ENCODE measurements at regions of chr2 and their contacts with region 1.

Region 1: DNA sequence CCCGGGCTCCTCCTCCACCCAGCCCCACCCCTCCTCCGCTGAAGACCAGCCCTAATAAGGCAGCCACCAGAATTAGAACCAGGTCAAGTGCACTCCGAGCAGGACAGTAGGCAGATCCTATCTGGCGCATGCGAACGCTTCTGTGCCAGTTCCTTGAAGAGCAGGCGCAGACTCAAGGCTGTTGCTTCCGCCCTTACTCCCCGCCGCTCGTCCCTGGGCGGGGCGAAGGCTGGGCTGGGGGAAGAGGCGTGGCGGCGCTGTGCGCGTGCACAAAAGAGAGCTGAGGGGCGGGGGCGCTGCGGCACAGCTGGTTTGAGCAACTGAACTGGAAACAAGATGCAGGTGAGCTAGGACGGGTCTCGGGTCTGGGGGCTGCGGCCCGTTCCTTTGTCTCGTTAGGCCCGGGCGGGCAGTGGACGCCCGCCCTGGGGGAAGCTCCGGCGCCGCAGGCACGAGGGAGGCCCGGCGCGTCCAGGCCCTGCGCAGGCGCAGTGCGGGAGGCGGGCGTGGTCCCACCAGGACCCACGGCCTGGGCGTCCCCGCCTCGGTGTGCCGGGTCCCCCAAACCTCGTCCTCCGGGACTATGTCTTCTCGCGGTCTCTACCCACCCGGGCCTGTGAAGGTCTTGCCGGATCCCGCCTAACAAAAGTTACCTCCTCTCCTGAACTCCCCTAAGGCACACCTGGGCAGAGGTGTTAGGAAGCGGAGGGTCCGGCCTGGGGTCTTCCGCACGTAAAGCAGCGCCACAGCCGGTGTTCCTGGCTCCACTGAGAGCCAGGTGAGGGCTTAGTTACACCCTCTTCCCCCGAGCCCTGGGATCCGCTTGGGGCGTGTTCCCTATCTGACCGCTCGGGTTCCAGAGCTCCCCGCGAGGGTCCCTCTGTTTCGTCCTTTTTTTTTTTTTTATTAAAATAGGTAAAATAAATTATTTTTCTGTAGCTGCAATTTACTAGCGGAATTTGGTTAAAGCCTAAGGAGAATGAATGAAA is at the start of gene PDCL3:
- DNase-seq: peak; percentile 92 to 98
- H3K4me3 ChIP-seq: peak within 1 kb of the TSS; percentile 63 to 85 (median 68)
- H3K27ac ChIP-seq: peak within 1 kb of the TSS; percentile 93 to 95
- H3K4me1 ChIP-seq: no peaks in the 10 kb centered on the region
- H3K27me3 ChIP-seq: no peaks in the 10 kb centered on the region
- CTCF ChIP-seq: peak in 1 of 3 donors; percentile 6
- POLR2A ChIP-seq: no peak
- total RNA-seq, gene PDCL3: 11.3 to 17.7 (median 14.4) TPM

Region 2: GRCh38 chr2:99141110-99142108 is 1421.6 kb before region 1 on chr2 and contains the start of gene C2orf15:
- intact Hi-C with region 1: loop called (anchors 10 kb)
- DNase-seq: peak; percentile 94 to 95
- H3K4me3 ChIP-seq: peak within 1 kb of the TSS; percentile 83 to 96 (median 95)
- H3K27ac ChIP-seq: peak within 1 kb of the TSS; percentile 95 to 96
- H3K4me1 ChIP-seq: peaks cover 0 to 6% of the 10 kb centered on the region in 2 donors
- H3K27me3 ChIP-seq: no peaks in the 10 kb centered on the region
- CTCF ChIP-seq: no peak
- POLR2A ChIP-seq: peak; percentile 56
- total RNA-seq, gene C2orf15: 1.6 to 4.8 (median 2.6) TPM